ENCODE measurements at regions of chr12 and their contacts with region 1.

Region 1: DNA sequence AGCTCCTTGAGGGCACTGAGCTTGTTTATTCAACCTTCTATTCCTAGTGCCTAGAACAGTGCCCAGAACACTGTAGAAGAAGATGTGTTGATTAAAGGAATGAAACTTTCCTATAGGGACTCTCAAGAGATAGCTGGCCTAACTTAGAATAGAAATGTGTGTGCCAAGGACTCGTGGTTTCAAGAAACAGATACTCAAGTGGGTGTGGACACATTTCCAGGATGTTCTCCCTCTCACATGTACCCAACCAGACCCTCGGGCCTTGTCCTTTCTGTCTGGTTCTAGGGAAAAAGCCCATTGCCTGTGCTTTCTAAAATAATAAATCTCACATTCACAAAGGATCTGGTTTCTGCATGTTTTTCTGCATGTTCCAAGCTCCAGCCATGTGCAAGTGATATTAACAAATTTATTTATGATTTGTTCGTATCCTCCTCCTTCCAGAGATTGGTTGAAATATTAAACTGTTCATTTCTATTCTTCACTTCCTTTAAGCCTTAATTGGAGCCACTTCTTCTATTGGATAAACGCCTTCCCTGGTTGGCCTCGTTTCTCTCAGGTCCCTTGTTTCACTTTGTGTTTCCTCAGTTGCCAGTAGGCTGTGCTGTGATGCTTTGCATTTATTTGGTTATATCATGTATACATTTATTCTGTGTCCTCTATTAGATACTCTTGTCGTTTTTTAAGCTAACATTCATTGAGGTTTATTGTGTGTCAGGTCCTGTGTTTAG is 89.8 kb downstream of the CRADD start:
- DNase-seq: peak; percentile 68
- H3K4me3 ChIP-seq: no peak overlapping the region
- H3K27ac ChIP-seq: no peak overlapping the region
- H3K4me1 ChIP-seq: peaks cover 7% of the 10 kb centered on the region
- H3K27me3 ChIP-seq: no peaks in the 10 kb centered on the region
- CTCF ChIP-seq: peak; percentile 46 to 53
- POLR2A ChIP-seq: no peak

Region 2: GRCh38 chr12:93569656-93570551 is 197.1 kb before region 1 on chr12:
- CTCF ChIA-PET with region 1: interaction called, 42 read pairs
- POLR2A ChIA-PET with region 1: no interaction called
- dilution Hi-C with region 1: no loop called
- intact Hi-C with region 1: loop called (anchors 2 kb)
- DNase-seq: peak; percentile 74
- H3K4me3 ChIP-seq: peak overlapping the region; percentile 35 to 71 (median 68)
- H3K27ac ChIP-seq: no peak overlapping the region
- H3K4me1 ChIP-seq: peaks cover 24% of the 10 kb centered on the region
- H3K27me3 ChIP-seq: peaks cover 30 to 37% of the 10 kb centered on the region in 2 experiments
- CTCF ChIP-seq: peak; percentile 54 to 91
- POLR2A ChIP-seq: no peak

Region 3: DNA sequence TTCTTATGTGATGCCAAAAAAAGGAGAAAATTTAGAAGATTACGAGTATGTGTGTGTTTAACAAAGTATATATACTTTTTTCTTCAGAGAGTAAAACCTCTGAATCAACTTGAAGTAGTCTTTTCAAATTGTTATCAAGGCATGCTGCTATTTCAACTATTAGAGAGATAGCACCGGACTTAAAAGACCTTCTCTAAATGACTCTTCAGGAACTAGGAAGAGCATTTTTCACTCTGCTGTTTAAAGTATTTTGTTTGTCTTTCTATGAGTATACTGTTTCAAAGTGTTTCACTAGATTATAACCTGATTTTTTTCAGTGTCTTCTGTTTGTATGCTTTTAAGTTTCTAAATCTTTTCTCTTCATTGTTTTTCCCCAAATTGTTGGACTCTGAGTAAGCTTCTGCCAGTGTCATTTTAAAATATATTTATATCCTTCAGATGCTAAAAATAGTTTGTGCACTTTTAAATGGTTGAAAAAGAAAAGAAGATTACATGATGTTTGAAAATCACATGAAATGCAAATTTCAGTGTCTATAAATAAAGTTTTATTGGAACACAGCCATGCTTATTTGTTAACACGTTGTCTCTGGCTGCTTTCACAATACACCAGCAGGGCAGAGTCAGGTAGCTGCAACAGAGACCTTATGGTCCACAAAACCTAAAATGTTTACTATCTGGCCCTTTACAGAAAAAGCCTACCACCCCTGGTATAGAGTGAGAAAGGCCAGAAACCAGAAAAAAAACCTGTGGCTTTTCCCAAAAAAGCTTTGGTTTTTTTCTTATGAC is 68.5 kb before region 1 on chr12:
- CTCF ChIA-PET with region 1: no interaction called
- POLR2A ChIA-PET with region 1: no interaction called
- dilution Hi-C with region 1: no loop called
- intact Hi-C with region 1: no loop called
- DNase-seq: no peak
- H3K4me3 ChIP-seq: no peak overlapping the region
- H3K27ac ChIP-seq: no peak overlapping the region
- H3K4me1 ChIP-seq: no peaks in the 10 kb centered on the region
- H3K27me3 ChIP-seq: no peaks in the 10 kb centered on the region
- CTCF ChIP-seq: no peak
- POLR2A ChIP-seq: no peak

Region 4: DNA sequence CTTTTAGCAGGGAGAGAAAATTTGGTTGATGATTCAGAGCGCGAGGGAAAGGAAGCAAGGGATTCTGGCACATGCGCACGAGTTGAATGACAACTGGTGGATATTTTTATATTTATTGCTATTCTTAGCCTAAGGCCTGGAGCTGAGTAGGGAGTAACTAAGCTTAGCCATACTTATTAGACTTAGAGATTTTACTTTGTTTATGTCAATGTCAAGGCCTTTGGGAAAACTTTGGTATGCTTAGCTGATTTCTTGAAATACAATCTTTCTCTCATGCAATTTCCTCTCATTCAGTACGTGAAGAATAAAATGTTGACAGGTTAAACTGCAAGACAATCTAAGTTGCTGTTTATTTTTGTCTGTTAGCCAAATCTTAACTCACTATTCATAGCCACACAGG is 11.3 kb after region 1 on chr12:
- CTCF ChIA-PET with region 1: interaction called, 25 read pairs
- POLR2A ChIA-PET with region 1: no interaction called
- dilution Hi-C with region 1: no loop called
- intact Hi-C with region 1: no loop called
- DNase-seq: peak; percentile 82
- H3K4me3 ChIP-seq: no peak overlapping the region
- H3K27ac ChIP-seq: peak overlapping the region; percentile 96
- H3K4me1 ChIP-seq: peaks cover 33% of the 10 kb centered on the region
- H3K27me3 ChIP-seq: no peaks in the 10 kb centered on the region
- CTCF ChIP-seq: no peak
- POLR2A ChIP-seq: no peak

Region 5: DNA sequence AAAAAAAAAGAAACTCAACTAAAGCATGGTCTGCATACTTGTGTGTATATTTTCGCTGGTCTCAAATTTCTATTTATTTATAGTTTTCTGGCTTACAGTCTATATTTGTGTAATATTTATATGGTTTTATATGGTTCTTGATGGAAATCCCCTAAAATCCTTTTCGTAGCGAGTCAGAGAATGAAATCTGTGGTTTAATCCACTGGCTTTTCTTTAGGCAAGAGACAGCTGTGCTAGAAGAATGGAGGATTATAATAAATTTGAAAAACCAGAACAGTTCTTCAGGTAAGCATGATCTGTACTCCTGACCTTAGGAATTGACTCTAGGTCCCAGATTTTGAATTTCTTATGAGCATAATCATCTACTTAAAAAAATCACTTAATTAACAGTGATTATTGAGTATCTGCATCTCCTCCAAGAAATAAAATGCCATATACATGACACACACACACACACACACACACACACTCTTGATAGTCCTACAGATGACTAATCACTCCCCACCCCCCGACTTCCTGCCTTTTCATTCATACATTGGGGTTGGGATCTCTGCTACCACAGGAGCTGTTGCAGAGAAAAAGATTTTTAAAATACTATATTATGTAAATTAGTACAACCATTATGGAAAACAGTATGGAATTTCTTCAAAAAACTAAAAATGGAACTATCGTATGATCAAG is 23.7 kb after region 1 on chr12:
- CTCF ChIA-PET with region 1: interaction called, 25 read pairs
- POLR2A ChIA-PET with region 1: no interaction called
- dilution Hi-C with region 1: no loop called
- intact Hi-C with region 1: no loop called
- DNase-seq: peak; percentile 75
- H3K4me3 ChIP-seq: no peak overlapping the region
- H3K27ac ChIP-seq: peak overlapping the region; percentile 48
- H3K4me1 ChIP-seq: peaks cover 31% of the 10 kb centered on the region
- H3K27me3 ChIP-seq: no peaks in the 10 kb centered on the region
- CTCF ChIP-seq: no peak
- POLR2A ChIP-seq: no peak

Region 6: DNA sequence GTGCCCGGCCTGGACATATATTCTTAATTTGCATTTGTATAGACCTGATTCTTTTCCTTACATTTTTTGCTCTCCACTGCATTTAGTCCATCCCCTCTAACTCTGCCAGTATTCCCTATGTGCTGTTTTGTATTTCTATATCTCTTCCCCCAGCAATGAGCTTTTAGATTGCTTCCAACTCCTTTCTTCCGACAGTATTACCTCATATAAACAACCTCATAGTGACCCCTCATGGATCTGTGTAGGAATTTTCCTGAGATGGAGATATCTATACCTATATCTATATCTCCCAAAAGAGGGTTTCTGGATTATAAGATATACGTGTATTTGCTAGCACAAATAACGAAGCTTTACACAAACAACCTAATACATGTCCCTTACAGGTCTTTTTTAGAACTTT is 72.1 kb after region 1 on chr12:
- CTCF ChIA-PET with region 1: interaction called, 35 read pairs
- POLR2A ChIA-PET with region 1: no interaction called
- dilution Hi-C with region 1: no loop called
- intact Hi-C with region 1: loop called (anchors 1 kb)
- DNase-seq: no peak
- H3K4me3 ChIP-seq: no peak overlapping the region
- H3K27ac ChIP-seq: no peak overlapping the region
- H3K4me1 ChIP-seq: no peaks in the 10 kb centered on the region
- H3K27me3 ChIP-seq: no peaks in the 10 kb centered on the region
- CTCF ChIP-seq: no peak
- POLR2A ChIP-seq: no peak

Region 7: GRCh38 chr12:93979189-93979588 is 212.2 kb after region 1 on chr12:
- CTCF ChIA-PET with region 1: interaction called, 57 read pairs
- POLR2A ChIA-PET with region 1: no interaction called
- dilution Hi-C with region 1: no loop called
- intact Hi-C with region 1: loop called (anchors 1 kb)
- DNase-seq: peak; percentile 43
- H3K4me3 ChIP-seq: no peak overlapping the region
- H3K27ac ChIP-seq: no peak overlapping the region
- H3K4me1 ChIP-seq: no peaks in the 10 kb centered on the region
- H3K27me3 ChIP-seq: peaks cover 3 to 9% of the 10 kb centered on the region in 2 experiments
- CTCF ChIP-seq: peak; percentile 26 to 48
- POLR2A ChIP-seq: no peak

Measured in endothelial cell of umbilical vein (primary cell).